ENCODE measurements at regions of chr5 and their contacts with region 1.

Region 1: GRCh38 chr5:151659001-151659754 is 27.5 kb downstream of the SPARC start:
- DNase-seq: peak; percentile 85
- H3K4me3 Mint-ChIP-seq: no peak overlapping the region
- H3K27ac Mint-ChIP-seq: no peak overlapping the region
- H3K4me1 Mint-ChIP-seq: peaks cover 10% of the 10 kb centered on the region
- H3K27me3 Mint-ChIP-seq: peaks cover 19% of the 10 kb centered on the region

Region 2: DNA sequence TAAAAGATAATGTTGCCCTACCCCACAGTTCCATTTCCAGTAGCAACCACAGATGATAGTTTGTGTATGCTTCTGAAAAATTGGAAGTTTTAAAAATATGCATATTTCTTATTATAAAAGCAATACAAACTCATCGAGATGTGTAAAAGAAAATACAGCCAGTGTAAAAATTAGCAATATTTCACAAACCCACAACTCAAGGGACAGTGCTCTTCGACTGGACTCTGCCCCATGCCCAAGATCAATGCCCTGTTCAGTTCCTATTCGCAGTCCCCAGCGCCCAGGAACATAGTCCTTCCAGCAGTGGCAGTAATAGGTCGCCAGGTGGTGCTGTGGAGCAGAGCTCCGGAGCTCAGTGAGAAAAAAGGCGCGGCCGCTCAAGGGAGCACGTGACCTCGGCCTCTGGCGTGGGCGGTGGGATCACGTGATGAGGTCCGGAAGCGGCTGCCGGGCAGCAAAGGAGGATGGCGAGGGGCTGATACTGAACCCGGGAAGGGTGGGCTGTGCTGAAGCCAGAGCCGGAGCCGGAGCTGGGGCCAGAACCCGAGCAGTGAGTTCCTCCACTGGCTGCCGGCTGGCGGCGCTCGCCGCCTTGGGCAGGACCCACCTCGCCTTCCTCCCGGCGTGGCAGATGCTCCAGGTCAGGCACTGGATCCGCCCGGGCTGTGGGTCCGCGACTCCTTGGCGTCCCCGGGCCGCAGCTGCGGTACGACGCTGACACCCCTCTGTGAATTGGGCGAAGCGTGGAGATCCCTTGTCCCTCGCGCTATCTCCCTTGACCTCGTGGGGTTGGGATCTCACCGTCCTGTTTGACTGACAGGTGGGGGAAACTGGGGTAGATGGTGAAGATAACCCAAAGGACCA is 211.8 kb before region 1 on chr5 and contains the start of gene SLC36A1:
- CTCF ChIA-PET with region 1: interaction called, 10 read pairs
- DNase-seq: peak; percentile 93
- H3K4me3 Mint-ChIP-seq: peak within 1 kb of the TSS; percentile 80
- H3K27ac Mint-ChIP-seq: peak within 1 kb of the TSS; percentile 85
- H3K4me1 Mint-ChIP-seq: peaks cover 12% of the 10 kb centered on the region
- H3K27me3 Mint-ChIP-seq: peaks cover 22% of the 10 kb centered on the region

Region 3: GRCh38 chr5:151671950-151672349 is 12.8 kb after region 1 on chr5:
- CTCF ChIA-PET with region 1: interaction called, 15 read pairs
- DNase-seq: no peak
- H3K4me3 Mint-ChIP-seq: no peak overlapping the region
- H3K27ac Mint-ChIP-seq: no peak overlapping the region
- H3K4me1 Mint-ChIP-seq: no peaks in the 10 kb centered on the region
- H3K27me3 Mint-ChIP-seq: peaks cover 19% of the 10 kb centered on the region

Region 4: GRCh38 chr5:151719228-151720000 is 60.2 kb after region 1 on chr5:
- CTCF ChIA-PET with region 1: interaction called, 19 read pairs
- DNase-seq: peak; percentile 38
- H3K4me3 Mint-ChIP-seq: no peak overlapping the region
- H3K27ac Mint-ChIP-seq: no peak overlapping the region
- H3K4me1 Mint-ChIP-seq: no peaks in the 10 kb centered on the region
- H3K27me3 Mint-ChIP-seq: peaks cover 4% of the 10 kb centered on the region

Region 5: DNA sequence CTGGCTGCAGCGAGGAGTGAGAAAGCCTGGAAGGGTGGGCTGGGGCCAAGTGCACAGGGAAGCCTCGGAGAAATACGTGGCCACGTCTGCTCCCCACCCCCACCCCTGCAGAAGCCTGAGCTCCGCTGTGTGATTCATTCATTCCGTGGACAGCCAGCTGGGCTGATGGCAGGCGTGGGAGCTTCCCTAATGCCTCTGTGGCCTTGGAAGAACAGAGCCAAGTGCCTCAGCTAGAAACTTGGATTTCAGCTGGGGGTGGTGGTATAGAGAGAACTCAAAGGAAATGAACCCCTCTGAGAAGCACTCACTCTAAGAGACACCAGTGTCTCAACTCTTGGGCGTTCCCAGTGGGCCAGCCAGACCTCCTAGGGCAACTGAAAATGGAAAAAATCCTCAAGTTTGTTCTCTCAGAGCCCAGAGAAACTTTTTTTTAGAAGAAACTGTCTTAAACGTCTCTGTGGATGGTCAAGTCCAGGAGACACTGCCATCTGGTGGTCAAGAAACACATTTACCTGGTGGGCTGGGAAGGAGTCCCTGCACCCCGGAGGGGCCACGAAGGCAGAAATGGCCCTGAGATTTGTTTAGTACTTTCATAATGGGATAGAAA is 81.3 kb after region 1 on chr5:
- CTCF ChIA-PET with region 1: interaction called, 120 read pairs
- DNase-seq: peak; percentile 64
- H3K4me3 Mint-ChIP-seq: no peak overlapping the region
- H3K27ac Mint-ChIP-seq: peak overlapping the region; percentile 55
- H3K4me1 Mint-ChIP-seq: peaks cover 29% of the 10 kb centered on the region
- H3K27me3 Mint-ChIP-seq: no peaks in the 10 kb centered on the region

Region 6: DNA sequence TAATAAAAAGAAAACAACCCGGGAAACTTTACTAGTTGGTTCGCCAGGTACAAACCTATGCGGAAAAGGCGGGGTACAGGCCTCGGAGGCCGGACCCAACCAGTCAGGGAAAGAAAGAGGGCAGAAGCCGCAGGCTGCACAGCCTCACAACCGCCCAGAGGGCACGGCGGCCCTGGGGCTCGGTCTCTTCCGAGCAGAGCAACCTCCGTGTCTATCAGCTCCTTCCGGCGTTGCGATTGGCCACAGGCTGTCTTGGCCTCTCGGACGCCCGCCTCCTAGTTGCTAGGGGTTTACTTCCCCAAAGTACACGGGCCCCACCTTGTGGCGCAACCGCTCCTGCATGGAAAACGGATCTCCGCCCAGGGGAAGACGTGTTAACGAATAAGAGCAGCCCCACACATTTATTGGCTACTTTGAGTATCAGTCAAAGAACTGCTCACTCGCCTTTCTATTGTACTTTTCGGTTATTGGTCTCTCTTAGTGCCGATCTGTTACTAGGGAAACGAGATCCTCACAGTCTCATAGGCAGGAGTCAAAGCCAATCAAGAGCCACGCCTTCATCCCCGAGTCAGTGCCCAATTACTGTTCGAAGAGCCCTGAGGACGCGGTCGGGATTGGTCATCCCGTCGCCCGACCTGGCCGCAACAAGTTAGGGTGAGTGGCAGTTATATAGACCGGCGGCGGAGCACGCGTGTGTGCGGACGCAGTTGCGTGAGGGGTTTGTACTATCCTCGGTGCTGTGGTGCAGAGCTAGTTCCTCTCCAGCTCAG is 112.3 kb after region 1 on chr5 and contains the start of gene G3BP1:
- CTCF ChIA-PET with region 1: interaction called, 20 read pairs
- DNase-seq: peak; percentile 100
- H3K4me3 Mint-ChIP-seq: peak within 1 kb of the TSS; percentile 84
- H3K27ac Mint-ChIP-seq: peak within 1 kb of the TSS; percentile 97
- H3K4me1 Mint-ChIP-seq: peaks cover 42% of the 10 kb centered on the region
- H3K27me3 Mint-ChIP-seq: no peaks in the 10 kb centered on the region

Region 7: GRCh38 chr5:152142840-152143469 is 483.8 kb after region 1 on chr5:
- CTCF ChIA-PET with region 1: interaction called, 11 read pairs
- DNase-seq: peak; percentile 76
- H3K4me3 Mint-ChIP-seq: no peak overlapping the region
- H3K27ac Mint-ChIP-seq: no peak overlapping the region
- H3K4me1 Mint-ChIP-seq: no peaks in the 10 kb centered on the region
- H3K27me3 Mint-ChIP-seq: peaks cover 5% of the 10 kb centered on the region